ENCODE measurements at regions of chr12 and their contacts with region 1.

Region 1: DNA sequence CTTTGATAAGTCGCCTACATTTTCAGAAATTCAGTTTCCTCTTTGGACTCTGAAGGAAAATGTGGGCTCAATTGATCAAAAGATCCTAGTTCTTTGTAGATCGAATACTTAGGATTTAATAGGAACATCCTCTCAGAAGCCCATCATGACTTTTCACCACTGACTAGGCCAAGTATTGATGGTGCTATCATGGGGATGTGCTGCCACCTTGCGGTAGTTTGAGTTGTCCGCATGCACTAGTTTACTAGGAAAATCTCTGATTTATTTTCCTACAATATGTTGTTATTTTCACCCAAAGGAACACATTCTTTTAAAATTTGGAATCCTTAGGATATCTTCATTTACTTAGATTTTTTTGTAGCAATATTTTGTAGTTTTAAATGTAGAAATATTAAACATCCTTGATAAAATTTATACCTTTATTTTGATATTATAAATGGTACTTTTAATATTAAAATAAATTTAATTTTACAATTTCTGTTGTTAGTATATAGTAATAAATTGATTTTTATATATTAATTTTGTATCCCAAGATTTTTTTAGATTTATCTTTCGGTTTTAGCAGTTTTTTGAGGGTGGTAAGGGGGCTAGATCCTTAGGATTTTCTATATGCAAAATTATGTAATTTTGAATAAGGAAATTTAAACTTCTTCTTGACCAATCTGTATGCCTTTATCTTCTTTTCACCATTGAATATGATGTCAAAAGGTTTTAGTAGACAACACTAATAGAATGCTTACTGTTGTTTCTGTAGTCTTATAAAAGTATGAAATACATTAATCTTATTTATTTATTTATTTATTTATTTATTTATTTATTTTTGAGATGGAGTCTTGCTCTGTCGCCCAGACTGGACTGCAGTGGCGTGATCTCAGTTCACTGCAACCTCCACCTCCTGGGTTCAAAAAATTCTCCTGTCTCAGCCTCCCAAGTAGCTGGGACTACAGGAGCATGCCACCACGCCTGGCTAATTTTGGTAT is 52.9 kb upstream of the OR9K2 start:
- DNase-seq: peak; percentile 78
- ATAC-seq: peak; percentile 23; the same call in 1 of the 2 replicates
- H3K4me3 Mint-ChIP-seq: no peak overlapping the region
- H3K27ac Mint-ChIP-seq: no peak overlapping the region
- H3K4me1 Mint-ChIP-seq: peaks cover under 1% of the 10 kb centered on the region
- H3K27me3 Mint-ChIP-seq: no peaks in the 10 kb centered on the region
- CTCF ChIP-seq: peak; percentile 52

Region 2: GRCh38 chr12:54749191-54749818 is 324.0 kb before region 1 on chr12:
- CTCF ChIA-PET with region 1: interaction called, 19 read pairs
- POLR2A ChIA-PET with region 1: no interaction called
- DNase-seq: no peak
- ATAC-seq: peak; percentile 53; the same call in 1 of the 2 replicates
- H3K4me3 Mint-ChIP-seq: no peak overlapping the region
- H3K27ac Mint-ChIP-seq: no peak overlapping the region
- H3K4me1 Mint-ChIP-seq: no peaks in the 10 kb centered on the region
- H3K27me3 Mint-ChIP-seq: no peaks in the 10 kb centered on the region
- CTCF ChIP-seq: peak; percentile 56

Region 3: GRCh38 chr12:54795644-54796043 is 277.7 kb before region 1 on chr12:
- CTCF ChIA-PET with region 1: no interaction called
- POLR2A ChIA-PET with region 1: no interaction called
- DNase-seq: no peak
- ATAC-seq: no peak
- H3K4me3 Mint-ChIP-seq: no peak overlapping the region
- H3K27ac Mint-ChIP-seq: no peak overlapping the region
- H3K4me1 Mint-ChIP-seq: no peaks in the 10 kb centered on the region
- H3K27me3 Mint-ChIP-seq: no peaks in the 10 kb centered on the region
- CTCF ChIP-seq: no peak

Region 4: DNA sequence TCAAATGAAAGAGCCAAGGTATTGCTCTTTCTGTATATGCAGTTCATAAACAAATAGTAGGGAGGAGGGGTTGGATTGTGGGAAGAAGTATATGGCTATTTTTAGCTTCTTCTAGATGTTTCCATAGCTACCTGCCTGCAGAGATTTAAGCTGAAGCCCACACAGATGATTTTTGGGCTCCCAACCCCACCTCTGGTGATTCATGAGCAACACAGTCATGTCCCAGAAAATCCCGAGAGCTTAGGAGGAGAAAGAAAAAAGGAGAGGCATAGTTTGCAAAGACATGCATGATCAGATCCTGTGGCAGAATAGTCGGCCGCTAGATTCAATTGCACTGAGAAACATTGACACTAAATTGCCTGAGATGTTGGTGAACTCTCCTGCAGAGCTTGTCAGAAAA is 102.6 kb before region 1 on chr12:
- CTCF ChIA-PET with region 1: interaction called, 44 read pairs
- POLR2A ChIA-PET with region 1: no interaction called
- DNase-seq: no peak
- ATAC-seq: no peak
- H3K4me3 Mint-ChIP-seq: no peak overlapping the region
- H3K27ac Mint-ChIP-seq: no peak overlapping the region
- H3K4me1 Mint-ChIP-seq: peaks cover 4% of the 10 kb centered on the region
- H3K27me3 Mint-ChIP-seq: no peaks in the 10 kb centered on the region
- CTCF ChIP-seq: no peak

Region 5: GRCh38 chr12:54993161-54993835 is 80.0 kb before region 1 on chr12:
- CTCF ChIA-PET with region 1: interaction called, 325 read pairs
- POLR2A ChIA-PET with region 1: interaction called, 6 read pairs
- DNase-seq: peak; percentile 41
- ATAC-seq: peak; percentile 76
- H3K4me3 Mint-ChIP-seq: no peak overlapping the region
- H3K27ac Mint-ChIP-seq: no peak overlapping the region
- H3K4me1 Mint-ChIP-seq: peaks cover 26% of the 10 kb centered on the region
- H3K27me3 Mint-ChIP-seq: no peaks in the 10 kb centered on the region
- CTCF ChIP-seq: peak; percentile 75; the same call in 1 of the 2 replicates

Region 6: DNA sequence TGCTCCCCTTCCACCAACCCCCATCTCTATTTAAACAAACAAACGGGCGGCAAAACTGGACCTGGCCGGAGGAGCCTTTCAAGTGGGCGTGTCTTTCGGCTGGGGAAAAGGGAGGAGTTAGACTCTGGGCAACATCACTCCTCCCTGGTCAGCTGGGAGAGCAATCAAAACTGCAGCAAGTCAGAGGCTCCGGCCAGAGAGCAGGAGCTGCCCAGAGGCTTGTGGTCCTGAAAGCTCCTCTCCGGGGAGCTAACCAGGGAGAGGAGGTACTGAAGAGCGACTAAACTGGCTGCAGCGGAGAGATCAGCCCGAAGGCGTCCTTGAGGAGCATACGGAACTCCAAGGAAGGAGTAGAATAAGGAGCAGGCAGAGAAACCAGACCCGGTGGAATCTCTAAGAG is 53.6 kb before region 1 on chr12 and contains the start of gene NEUROD4:
- CTCF ChIA-PET with region 1: interaction called, 15 read pairs
- POLR2A ChIA-PET with region 1: no interaction called
- DNase-seq: peak; percentile 92
- ATAC-seq: peak; percentile 100
- H3K4me3 Mint-ChIP-seq: peak within 1 kb of the TSS; percentile 69
- H3K27ac Mint-ChIP-seq: no peak within 1 kb of the TSS
- H3K4me1 Mint-ChIP-seq: peaks cover 28% of the 10 kb centered on the region
- H3K27me3 Mint-ChIP-seq: peaks cover 20% of the 10 kb centered on the region
- CTCF ChIP-seq: no peak
- total RNA-seq, gene NEUROD4: not detected in 3 replicates

Region 7: GRCh38 chr12:55051197-55051933 is 22.0 kb before region 1 on chr12:
- CTCF ChIA-PET with region 1: interaction called, 16 read pairs
- POLR2A ChIA-PET with region 1: no interaction called
- DNase-seq: peak; percentile 19
- ATAC-seq: peak; percentile 78
- H3K4me3 Mint-ChIP-seq: no peak overlapping the region
- H3K27ac Mint-ChIP-seq: peak overlapping the region; percentile 17; the same call in 1 of the 2 replicates
- H3K4me1 Mint-ChIP-seq: peaks cover 12% of the 10 kb centered on the region
- H3K27me3 Mint-ChIP-seq: no peaks in the 10 kb centered on the region; the same call in 1 of the 2 replicates
- CTCF ChIP-seq: no peak